ENCODE measurements at regions of chr1 and their contacts with region 1.

Region 1: DNA sequence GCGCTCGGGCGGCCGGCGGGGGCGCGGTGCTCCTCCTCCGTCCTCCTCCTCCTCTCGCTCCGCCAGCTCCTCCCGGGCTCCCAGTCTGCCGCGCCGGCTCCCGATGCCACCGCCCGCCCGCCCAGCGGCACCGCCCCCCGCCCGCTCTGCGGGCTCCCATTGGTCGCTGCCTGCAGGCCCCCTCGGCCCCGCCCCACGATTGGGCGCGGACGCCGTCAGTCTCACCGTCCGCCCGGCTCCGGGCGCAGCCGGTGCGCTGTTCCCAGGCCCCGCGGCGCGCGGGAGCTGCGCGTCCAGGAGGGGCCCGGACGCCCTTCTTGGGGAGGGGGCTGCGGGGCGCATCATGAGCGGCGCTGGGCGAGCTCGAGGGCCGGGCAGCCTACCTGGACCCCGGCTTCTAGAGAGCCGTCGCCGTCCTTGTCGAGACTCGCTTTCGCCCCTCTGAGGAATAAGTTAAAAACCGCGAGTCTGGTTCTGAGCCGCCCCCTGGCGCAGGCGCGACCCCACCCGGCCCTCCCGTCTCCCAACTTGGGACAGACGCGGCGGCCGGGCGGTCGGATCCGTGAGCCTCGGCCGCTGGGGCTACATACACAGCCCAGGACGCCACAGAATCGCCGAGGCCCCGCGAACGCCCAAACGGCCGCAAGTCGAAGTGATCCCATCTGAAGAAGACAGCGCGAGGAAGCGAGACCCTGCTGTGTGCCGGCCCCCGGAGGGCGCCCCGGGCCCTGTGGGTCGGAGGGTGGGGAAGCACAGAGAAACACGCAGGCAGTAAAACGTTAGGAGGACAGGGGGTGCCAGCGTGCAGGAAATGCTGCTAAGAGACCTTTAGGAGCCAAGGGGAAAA is at the start of gene SIPA1L2:
- DNase-seq: peak; percentile 94
- H3K4me3 ChIP-seq: peak within 1 kb of the TSS; percentile 91 to 98 (median 94)
- H3K27ac ChIP-seq: peak within 1 kb of the TSS; percentile 90 to 98 (median 95)
- H3K4me1 ChIP-seq: peaks cover 8 to 39% (median 37%) of the 10 kb centered on the region in 4 donors
- H3K27me3 ChIP-seq: no peaks in the 10 kb centered on the region
- CTCF ChIP-seq: peak; percentile 56 to 63 (median 56)
- EP300 ChIP-seq: no peak
- POLR2A ChIP-seq: peak; percentile 14
- total RNA-seq, gene SIPA1L2: 37.4 to 59.0 (median 43.0) TPM

Region 2: DNA sequence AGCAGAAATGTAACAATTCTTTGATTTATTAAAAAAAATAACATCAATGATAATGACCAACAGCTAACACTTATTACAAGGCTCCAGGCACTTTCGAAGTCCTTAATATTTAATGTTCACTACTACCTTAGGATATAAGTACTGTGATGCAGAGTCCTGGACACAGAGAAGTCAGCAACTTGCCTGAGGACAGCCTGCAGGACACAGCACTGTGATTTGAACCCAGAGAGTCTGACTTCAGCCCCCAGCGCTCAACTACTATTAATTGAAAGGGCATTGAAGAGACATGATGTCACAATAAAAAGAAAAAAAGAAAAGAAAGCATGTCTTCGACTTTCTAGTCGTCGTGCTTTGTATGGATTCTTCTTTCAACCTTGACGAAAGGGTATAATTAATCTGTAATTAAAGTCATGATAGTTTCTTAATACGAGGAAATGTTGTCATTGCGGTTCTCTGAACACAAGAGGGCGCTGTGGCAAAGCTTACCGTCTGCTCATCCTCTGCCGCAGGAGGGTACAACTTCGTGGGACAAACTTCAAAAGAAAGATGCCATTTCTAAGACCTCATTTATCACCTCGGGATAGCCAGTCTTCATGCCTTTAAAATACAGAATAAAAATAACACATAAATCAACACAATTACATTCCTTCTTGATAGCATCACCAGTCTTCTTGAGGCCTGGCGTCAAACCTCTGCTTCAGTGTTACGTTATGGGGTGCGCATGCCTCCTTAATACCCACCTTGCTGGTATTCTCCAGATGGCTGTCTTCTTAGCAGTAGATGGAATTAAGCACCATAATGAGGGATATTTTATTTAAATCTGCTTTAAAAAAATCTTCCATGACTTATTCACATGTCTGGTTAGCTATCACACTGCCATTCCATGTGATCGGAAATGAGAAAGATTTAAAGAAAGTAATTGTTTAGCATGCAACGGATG is 763.6 kb before region 1 on chr1:
- intact Hi-C with region 1: loop called (anchors 5 kb)
- DNase-seq: no peak
- H3K4me3 ChIP-seq: no peak overlapping the region
- H3K27ac ChIP-seq: peak overlapping the region in 1 of 4 donors; percentile 51
- H3K4me1 ChIP-seq: peaks cover 19 to 27% (median 26%) of the 10 kb centered on the region in 4 donors
- H3K27me3 ChIP-seq: no peaks in the 10 kb centered on the region
- CTCF ChIP-seq: peak; percentile 80 to 84 (median 81)
- EP300 ChIP-seq: no peak
- POLR2A ChIP-seq: no peak

Region 3: GRCh38 chr1:232142403-232143314 is 487.6 kb before region 1 on chr1:
- intact Hi-C with region 1: loop called (anchors 10 kb)
- DNase-seq: peak; percentile 93
- H3K4me3 ChIP-seq: no peak overlapping the region
- H3K27ac ChIP-seq: peak overlapping the region; percentile 56 to 82 (median 78)
- H3K4me1 ChIP-seq: peaks cover 13 to 25% (median 21%) of the 10 kb centered on the region in 4 donors
- H3K27me3 ChIP-seq: no peaks in the 10 kb centered on the region
- CTCF ChIP-seq: no peak
- EP300 ChIP-seq: no peak
- POLR2A ChIP-seq: no peak

Region 4: DNA sequence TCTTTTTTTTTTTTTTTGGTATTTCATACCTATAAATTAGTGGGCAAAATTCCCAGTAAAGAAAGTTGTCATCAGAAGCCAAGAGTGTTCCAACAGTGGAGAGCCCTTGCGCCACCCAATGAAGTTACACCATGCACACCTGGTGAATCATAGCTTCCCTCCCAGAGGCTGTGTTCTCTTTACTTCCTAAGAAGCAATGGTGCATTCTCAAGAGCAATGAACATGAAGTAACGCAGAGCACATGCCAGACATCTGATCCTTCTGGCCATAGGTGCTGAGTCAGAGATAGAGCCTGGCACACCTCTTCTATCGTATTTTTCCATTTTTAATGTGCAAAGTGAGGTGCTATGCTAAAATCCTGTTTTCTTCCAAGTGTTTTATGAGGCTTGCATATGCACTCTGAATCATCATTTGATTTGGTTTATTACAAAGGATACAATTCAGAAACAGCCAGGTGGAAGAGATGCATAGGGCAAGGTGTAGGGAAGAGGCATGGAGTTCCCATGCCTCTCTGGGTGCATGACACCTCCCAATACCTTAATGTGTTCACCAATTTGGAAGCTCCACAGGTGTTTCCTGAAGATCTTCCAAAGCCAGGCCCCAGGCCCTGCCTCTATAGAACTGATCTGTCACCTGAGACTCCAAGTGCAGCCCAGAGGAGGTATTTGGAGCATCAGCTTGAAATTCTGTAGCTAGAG is 408.3 kb before region 1 on chr1:
- intact Hi-C with region 1: no loop called
- DNase-seq: peak; percentile 50
- H3K4me3 ChIP-seq: no peak overlapping the region
- H3K27ac ChIP-seq: no peak overlapping the region
- H3K4me1 ChIP-seq: peaks cover 0 to 6% (median under 1%) of the 10 kb centered on the region in 4 donors
- H3K27me3 ChIP-seq: no peaks in the 10 kb centered on the region
- CTCF ChIP-seq: no peak
- EP300 ChIP-seq: no peak
- POLR2A ChIP-seq: no peak

Region 5: DNA sequence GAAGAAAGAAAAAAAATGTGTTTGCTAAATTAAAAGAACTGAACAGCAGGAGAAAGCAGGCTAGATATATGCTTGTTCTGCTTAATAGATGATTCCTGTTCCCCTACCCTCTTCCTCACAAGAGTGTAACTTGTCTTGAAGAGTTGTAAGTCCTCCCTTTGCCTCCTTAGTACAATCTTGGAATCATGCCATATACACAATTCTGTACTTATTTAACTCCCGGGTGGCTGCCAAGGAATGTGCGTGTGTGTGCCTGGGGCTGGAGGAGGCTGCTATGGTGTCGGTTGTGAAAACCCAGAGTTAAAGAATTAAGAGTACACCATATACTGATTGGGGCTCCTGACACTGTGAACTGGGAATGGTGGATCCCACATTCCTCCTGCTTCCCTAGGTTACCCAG is 194.5 kb before region 1 on chr1:
- intact Hi-C with region 1: loop called (anchors 10 kb)
- DNase-seq: no peak
- H3K4me3 ChIP-seq: no peak overlapping the region
- H3K27ac ChIP-seq: peak overlapping the region in 1 of 4 donors; percentile 2
- H3K4me1 ChIP-seq: peaks cover 26 to 31% (median 27%) of the 10 kb centered on the region in 4 donors
- H3K27me3 ChIP-seq: no peaks in the 10 kb centered on the region
- CTCF ChIP-seq: no peak
- EP300 ChIP-seq: no peak
- POLR2A ChIP-seq: no peak

Region 6: DNA sequence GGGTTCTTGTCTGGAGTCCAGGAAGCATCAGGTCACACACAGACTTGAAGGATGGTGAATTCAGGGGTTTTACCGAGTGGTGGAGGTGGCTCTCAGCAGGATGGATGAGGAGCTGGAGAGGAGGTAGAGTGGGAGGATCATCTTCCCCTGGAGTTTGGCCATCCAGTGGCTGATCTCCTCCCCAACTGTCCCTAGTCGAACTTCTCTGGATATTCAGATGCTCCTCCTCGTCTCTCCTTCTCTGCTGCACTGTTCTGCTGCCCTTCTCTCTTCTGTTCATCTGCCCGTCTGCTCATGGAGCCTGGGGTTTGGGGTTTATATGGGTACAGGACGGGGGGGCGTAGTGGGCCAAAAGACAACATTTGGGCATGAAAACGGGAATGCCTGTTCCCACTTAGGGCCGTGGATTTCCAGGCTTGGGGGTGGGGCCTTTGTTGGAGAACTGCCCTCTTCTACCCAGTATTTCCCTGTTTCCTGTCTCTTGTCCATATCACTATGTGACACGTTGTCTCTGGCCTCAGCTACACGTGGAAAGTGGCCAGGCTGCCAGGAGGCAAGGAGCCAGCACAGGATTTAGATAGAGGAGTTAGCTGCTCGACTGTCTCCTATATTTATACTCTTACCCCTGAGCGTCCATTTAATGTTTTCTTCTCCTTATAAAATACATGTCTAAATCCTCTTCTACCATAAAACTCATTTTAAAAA is 77.1 kb before region 1 on chr1:
- intact Hi-C with region 1: loop called (anchors 5 kb)
- DNase-seq: no peak
- H3K4me3 ChIP-seq: peak overlapping the region in 1 of 4 donors; percentile 4
- H3K27ac ChIP-seq: peak overlapping the region; percentile 53 to 65 (median 60)
- H3K4me1 ChIP-seq: peaks cover 70 to 89% (median 82%) of the 10 kb centered on the region in 4 donors
- H3K27me3 ChIP-seq: no peaks in the 10 kb centered on the region
- CTCF ChIP-seq: no peak
- EP300 ChIP-seq: no peak
- POLR2A ChIP-seq: no peak

Region 7: DNA sequence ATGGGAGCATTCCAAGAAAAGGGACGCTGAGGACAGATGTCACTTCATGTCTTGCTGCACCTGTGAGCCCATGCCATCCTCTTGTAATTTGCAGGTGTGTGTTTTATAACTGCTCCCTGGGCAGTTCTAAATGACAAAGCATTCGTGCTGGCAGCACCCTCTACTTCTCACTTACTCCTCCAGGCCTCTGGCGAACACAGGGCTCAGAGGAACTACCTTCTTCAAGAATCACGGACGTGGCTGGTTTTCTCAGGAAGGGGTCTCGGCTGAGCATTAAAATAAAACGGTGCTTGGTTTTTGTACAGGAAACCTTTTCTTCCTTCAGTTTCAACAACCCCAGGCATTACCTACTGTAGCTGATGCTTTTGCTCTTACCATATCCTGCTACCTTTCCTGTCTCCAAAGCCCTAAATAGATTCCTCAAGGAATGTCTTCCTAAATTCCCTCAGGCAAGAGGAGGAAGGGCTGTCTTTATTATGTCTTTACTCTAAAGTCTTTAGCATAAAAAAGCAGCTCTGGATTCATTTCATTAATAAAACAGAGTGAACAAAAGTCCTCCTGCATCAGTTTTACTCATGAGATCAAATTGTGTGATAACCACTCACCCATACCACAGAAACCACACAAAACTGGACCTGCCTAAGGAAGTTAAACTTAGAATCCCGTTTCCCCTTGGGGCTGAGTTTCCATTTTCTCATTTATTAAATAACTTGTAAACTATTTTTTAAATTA is 95.9 kb after region 1 on chr1:
- intact Hi-C with region 1: no loop called
- DNase-seq: no peak
- H3K4me3 ChIP-seq: no peak overlapping the region
- H3K27ac ChIP-seq: no peak overlapping the region
- H3K4me1 ChIP-seq: peaks cover 0 to 10% (median 0%) of the 10 kb centered on the region in 4 donors
- H3K27me3 ChIP-seq: no peaks in the 10 kb centered on the region
- CTCF ChIP-seq: no peak
- EP300 ChIP-seq: no peak
- POLR2A ChIP-seq: no peak

Region 8: GRCh38 chr1:233172227-233172626 is 542.0 kb after region 1 on chr1:
- intact Hi-C with region 1: loop called (anchors 10 kb)
- DNase-seq: no peak
- H3K4me3 ChIP-seq: no peak overlapping the region
- H3K27ac ChIP-seq: no peak overlapping the region
- H3K4me1 ChIP-seq: no peaks in the 10 kb centered on the region
- H3K27me3 ChIP-seq: no peaks in the 10 kb centered on the region
- CTCF ChIP-seq: peak in 2 of 3 experiments; percentile 20 to 33
- EP300 ChIP-seq: no peak
- POLR2A ChIP-seq: no peak

Measured in esophagus muscularis mucosa (tissue), 4 donors.